Stomach (tissue), 19 donors: ENCODE measurements at regions of chr11 and their contacts with region 1.

Region 1: GRCh38 chr11:44036811-44037657 is 10.7 kb upstream of the ACCSL start:
- DNase-seq: peak; percentile 66 to 94
- H3K4me3 ChIP-seq: no peak overlapping the region
- H3K27ac ChIP-seq: peak overlapping the region in 2 of 5 donors; percentile 6 to 40
- H3K4me1 ChIP-seq: peaks cover 0 to 19% (median 10%) of the 10 kb centered on the region in 4 donors
- H3K27me3 ChIP-seq: no peaks in the 10 kb centered on the region
- CTCF ChIP-seq: peak in 5 of 7 experiments; percentile 21 to 73 (median 64)
- EP300 ChIP-seq: no peak
- POLR2A ChIP-seq: no peak

Region 2: DNA sequence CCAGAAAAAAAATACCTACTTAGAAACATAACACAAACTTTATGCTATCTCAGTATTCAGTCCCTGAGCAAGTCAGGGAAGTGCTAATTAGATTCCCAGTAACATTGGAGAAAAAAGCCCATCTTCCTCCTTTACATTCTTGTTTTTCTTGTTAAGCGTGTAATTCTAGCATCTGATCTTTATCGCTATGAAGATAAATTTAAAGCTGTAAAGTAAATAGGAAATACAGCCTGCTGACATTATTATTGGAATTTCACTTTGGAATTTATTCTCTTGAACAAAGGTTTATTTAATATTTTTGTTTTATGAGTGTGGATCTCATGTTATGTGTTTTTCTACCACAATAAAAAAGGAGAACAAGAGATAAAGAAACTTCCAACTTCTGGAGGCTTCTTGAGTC is 142.5 kb before region 1 on chr11:
- intact Hi-C with region 1: loop called (anchors 5 kb)
- DNase-seq: no peak
- H3K4me3 ChIP-seq: no peak overlapping the region
- H3K27ac ChIP-seq: no peak overlapping the region
- H3K4me1 ChIP-seq: peaks cover 0 to 10% (median 2%) of the 10 kb centered on the region in 4 donors
- H3K27me3 ChIP-seq: no peaks in the 10 kb centered on the region
- CTCF ChIP-seq: no peak
- EP300 ChIP-seq: no peak
- POLR2A ChIP-seq: no peak